ENCODE measurements at regions of chr1 and their contacts with region 1.

Region 1: DNA sequence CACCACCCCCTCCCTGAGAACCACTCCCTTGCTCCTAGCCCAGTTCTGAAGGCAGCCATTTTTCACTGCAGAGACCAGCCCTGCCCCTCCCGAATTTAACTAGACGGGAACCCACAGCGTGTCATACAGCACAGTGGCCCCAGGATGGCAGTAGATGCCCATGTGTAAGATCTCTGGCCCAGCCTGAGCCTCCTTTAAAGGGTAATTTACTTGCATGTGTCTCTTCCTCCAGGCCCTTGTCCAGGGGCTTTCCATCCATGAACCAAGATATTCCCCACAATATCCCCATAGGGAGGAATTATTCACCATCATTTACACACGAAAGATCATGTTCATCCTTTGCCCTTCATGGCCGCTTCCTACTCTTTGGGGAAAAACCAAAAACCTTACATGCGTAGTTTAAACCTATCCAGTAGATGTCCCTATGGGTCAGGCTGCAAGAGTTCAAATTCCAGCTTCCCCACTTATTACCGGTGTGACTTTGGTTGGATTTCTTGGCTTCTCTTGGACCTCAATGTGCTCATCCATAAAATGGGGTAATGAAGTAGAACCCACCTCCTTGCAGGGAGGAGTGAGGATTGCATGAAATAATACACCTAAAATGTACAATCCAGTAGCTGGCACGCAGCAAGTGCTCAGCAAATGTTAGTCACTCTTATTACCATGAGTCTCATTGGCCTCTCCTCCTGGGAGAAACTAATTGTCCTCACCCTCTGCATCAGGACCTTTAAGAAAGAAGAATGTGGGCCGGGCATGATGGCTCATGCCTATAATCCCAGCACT is 4.0 kb upstream of the LACTBL1 start:
- DNase-seq: peak in 4 of 5 donors; percentile 35 to 55 (median 47)
- ATAC-seq: peak; percentile 79 to 96 (median 94)
- H3K4me3 ChIP-seq: no peak overlapping the region
- H3K27ac ChIP-seq: no peak overlapping the region
- H3K4me1 ChIP-seq: no peaks in the 10 kb centered on the region
- H3K27me3 ChIP-seq: peaks cover 0 to 16% (median 6%) of the 10 kb centered on the region in 9 donors
- CTCF ChIP-seq: peak; percentile 37 to 68 (median 64)
- POLR2A ChIP-seq: no peak

Region 2: DNA sequence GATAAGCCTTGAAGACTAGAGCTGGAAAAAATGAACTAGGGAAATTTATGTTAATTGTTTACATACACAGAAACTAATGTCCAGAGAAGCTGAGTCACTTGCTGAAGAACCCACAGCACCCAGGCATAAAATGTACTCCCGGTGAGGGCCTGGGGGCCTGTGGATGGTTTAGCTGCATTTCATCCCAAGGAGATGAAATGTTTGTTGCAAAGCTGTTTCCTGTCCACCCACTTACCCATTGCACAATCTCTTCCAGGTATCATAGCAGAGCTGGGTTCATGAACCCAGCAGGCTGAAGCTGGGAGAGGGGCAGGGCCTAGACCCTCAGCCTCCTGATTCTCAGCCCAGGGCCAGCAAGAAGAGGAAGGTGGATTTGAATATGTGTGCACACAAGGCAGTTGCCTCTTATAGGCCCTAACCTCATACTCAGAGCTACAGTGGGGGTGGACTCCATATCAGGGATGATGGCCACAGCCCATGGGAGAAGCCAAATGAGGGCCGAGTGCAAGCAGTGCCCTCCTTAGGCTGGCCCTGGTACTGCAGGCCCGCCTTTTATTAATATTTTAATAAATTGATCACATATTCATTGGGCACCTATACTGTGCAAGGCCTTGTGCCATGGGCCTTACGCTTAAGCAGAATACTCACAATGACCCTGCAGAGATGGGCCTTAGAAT is 114.8 kb before region 1 on chr1:
- intact Hi-C with region 1: no loop called
- DNase-seq: peak in 1 of 5 donors; percentile 13
- ATAC-seq: peak; percentile 48 to 77 (median 65)
- H3K4me3 ChIP-seq: no peak overlapping the region
- H3K27ac ChIP-seq: no peak overlapping the region
- H3K4me1 ChIP-seq: peaks cover 0 to 4% (median 0%) of the 10 kb centered on the region in 12 donors
- H3K27me3 ChIP-seq: no peaks in the 10 kb centered on the region
- CTCF ChIP-seq: peak; percentile 55 to 77 (median 70)
- POLR2A ChIP-seq: no peak

Region 3: GRCh38 chr1:23081376-23081775 is 104.7 kb after region 1 on chr1:
- intact Hi-C with region 1: loop called in 1 of 10 experiments (anchors 10 kb)
- DNase-seq: no peak
- ATAC-seq: no peak
- H3K4me3 ChIP-seq: no peak overlapping the region
- H3K27ac ChIP-seq: no peak overlapping the region
- H3K4me1 ChIP-seq: peaks cover 0 to 16% (median 8%) of the 10 kb centered on the region in 12 donors
- H3K27me3 ChIP-seq: no peaks in the 10 kb centered on the region
- CTCF ChIP-seq: peak in 2 of 12 donors; percentile 11 to 22
- POLR2A ChIP-seq: no peak

Region 4: GRCh38 chr1:23184212-23184934 is 207.7 kb after region 1 on chr1:
- intact Hi-C with region 1: loop called (anchors 2 to 10 kb)
- DNase-seq: peak in 1 of 5 donors; percentile 23
- ATAC-seq: peak; percentile 18 to 42 (median 22)
- H3K4me3 ChIP-seq: peak overlapping the region in 9 of 12 donors; percentile 37 to 58 (median 44)
- H3K27ac ChIP-seq: no peak overlapping the region
- H3K4me1 ChIP-seq: peaks cover 0 to 8% (median 5%) of the 10 kb centered on the region in 12 donors
- H3K27me3 ChIP-seq: no peaks in the 10 kb centered on the region
- CTCF ChIP-seq: peak; percentile 57 to 93 (median 86)
- POLR2A ChIP-seq: no peak